ENCODE measurements at regions of chr6 and their contacts with region 1.

Region 1: DNA sequence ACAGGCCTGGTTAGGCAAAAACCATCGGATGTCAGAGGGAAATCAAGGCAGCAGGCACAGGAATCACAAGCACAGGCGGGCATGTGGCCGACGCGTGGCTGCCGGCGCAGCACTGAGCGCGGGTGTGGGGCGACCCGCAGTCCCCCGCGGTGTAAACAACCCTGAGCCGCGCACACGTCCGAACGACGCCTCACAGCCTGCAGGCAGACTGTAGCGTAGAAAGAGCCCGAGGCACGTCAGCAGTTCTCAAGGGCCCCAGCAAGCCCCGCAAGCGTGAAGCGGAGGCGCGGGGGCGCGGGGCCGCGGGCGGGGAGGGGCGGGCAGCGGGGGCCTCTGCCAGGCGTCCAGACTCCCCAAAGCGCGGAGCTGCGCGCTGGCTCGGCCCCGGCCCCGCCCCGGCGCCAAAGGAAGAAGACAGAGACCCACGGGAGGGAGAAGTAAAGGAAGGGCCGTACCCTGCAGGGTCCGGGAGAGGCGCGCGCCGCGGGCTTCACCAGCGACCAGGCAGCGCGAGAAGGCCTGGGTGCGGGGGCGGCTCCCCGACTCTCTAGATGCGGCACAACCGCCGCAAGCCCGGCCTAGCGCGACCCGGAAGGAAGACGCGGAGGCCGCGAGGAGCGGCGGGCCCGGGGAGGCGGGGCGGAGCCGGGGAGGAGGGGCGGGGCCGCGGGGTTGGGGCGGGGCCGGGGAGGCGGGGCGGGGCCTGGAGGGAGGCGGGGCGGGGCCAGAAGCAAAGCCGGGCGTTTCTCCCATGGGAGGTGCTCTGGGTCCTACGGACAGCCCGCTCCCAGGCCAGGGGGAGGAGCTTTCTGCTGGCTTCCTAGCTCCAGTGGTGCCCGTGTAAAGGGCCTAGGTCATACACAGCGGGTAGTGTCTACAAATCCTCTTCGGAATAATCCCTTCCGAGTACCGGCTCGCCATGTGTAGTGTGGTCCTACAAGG is at the start of gene FBXL4:
- DNase-seq: peak; percentile 53 to 87 (median 72)
- ATAC-seq: peak; percentile 82
- H3K4me3 ChIP-seq: peak within 1 kb of the TSS; percentile 61 to 64
- H3K4me3 Mint-ChIP-seq: peak within 1 kb of the TSS; percentile 94
- H3K27ac ChIP-seq: peak within 1 kb of the TSS; percentile 46 to 56
- H3K27ac Mint-ChIP-seq: peak within 1 kb of the TSS; percentile 96
- H3K4me1 ChIP-seq: peaks cover 11% of the 10 kb centered on the region
- H3K4me1 Mint-ChIP-seq: peaks cover 34% of the 10 kb centered on the region
- H3K27me3 ChIP-seq: no peaks in the 10 kb centered on the region
- H3K27me3 Mint-ChIP-seq: no peaks in the 10 kb centered on the region
- CTCF ChIP-seq: no peak
- total RNA-seq, gene FBXL4: 4.1 to 5.1 TPM

Region 2: GRCh38 chr6:98834060-98835031 is 113.3 kb before region 1 on chr6 and contains the start of gene POU3F2:
- CTCF ChIA-PET with region 1: no interaction called
- POLR2A ChIA-PET with region 1: no interaction called
- intact Hi-C with region 1: loop called in 1 of 2 experiments (anchors 1 kb)
- DNase-seq: peak in 8 of 9 experiments; percentile 35 to 74 (median 59)
- ATAC-seq: peak; percentile 67
- H3K4me3 ChIP-seq: peak within 1 kb of the TSS; percentile 55 to 58
- H3K4me3 Mint-ChIP-seq: peak within 1 kb of the TSS; percentile 94
- H3K27ac ChIP-seq: no peak within 1 kb of the TSS
- H3K27ac Mint-ChIP-seq: no peak within 1 kb of the TSS
- H3K4me1 ChIP-seq: peaks cover 29% of the 10 kb centered on the region
- H3K4me1 Mint-ChIP-seq: peaks cover 43% of the 10 kb centered on the region
- H3K27me3 ChIP-seq: peaks cover 44 to 61% of the 10 kb centered on the region in 2 experiments
- H3K27me3 Mint-ChIP-seq: peaks cover 65% of the 10 kb centered on the region
- CTCF ChIP-seq: no peak
- total RNA-seq, gene POU3F2: not detected

Region 3: GRCh38 chr6:98904096-98904495 is 43.5 kb before region 1 on chr6:
- CTCF ChIA-PET with region 1: no interaction called
- POLR2A ChIA-PET with region 1: no interaction called
- intact Hi-C with region 1: no loop called
- DNase-seq: no peak
- ATAC-seq: no peak
- H3K4me3 ChIP-seq: no peak overlapping the region
- H3K4me3 Mint-ChIP-seq: no peak overlapping the region
- H3K27ac ChIP-seq: no peak overlapping the region
- H3K27ac Mint-ChIP-seq: no peak overlapping the region
- H3K4me1 ChIP-seq: no peaks in the 10 kb centered on the region
- H3K4me1 Mint-ChIP-seq: no peaks in the 10 kb centered on the region
- H3K27me3 ChIP-seq: no peaks in the 10 kb centered on the region
- H3K27me3 Mint-ChIP-seq: no peaks in the 10 kb centered on the region
- CTCF ChIP-seq: no peak

Region 4: DNA sequence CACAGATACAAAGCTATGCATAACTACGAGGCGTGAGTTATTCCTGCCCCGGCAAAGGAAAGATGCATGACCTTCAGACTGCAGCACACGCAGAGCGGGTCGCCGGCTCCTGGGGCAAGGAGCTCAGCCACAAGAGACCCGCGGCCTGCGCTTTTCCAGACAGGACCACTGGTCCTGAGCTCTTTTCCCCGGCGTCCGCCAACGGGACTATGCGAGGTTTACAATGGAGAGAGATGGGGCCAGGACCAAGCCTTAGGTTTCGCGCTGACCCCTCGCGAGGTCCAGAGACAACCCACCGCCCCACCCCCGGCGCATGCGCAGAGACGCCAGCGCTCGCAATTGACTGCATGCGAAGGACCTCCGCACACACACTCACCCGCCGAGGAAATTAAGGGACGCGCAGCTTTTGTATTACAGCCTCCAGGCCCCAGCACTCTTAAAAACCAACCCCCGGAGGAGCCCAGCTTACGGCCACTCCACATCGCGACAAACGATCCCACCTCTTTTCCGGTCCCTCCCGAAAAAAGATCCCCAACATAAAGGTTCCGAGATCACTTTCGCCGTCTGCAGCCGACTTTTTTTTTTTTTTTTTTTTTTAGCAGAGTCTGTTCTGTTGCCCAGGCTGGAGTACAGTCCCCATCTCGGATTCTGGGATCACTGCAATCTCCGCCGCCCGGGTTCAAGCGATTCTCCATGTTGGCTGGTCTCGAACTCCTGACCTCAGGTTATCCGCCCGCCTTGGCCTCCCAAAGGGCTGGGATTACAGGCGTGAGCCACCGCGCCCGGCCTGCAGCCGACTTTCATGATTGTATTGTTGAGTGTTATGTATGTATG is 446.3 kb after region 1 on chr6 and contains the start of gene COQ3:
- CTCF ChIA-PET with region 1: no interaction called
- POLR2A ChIA-PET with region 1: no interaction called
- intact Hi-C with region 1: loop called in 1 of 2 experiments (anchors 10 kb)
- DNase-seq: peak; percentile 28 to 79 (median 65)
- ATAC-seq: peak; percentile 70
- H3K4me3 ChIP-seq: peak within 1 kb of the TSS; percentile 73 to 94
- H3K4me3 Mint-ChIP-seq: peak within 1 kb of the TSS; percentile 95
- H3K27ac ChIP-seq: peak within 1 kb of the TSS; percentile 57 to 62
- H3K27ac Mint-ChIP-seq: peak within 1 kb of the TSS; percentile 91
- H3K4me1 ChIP-seq: peaks cover 5% of the 10 kb centered on the region
- H3K4me1 Mint-ChIP-seq: peaks cover 25% of the 10 kb centered on the region
- H3K27me3 ChIP-seq: no peaks in the 10 kb centered on the region
- H3K27me3 Mint-ChIP-seq: no peaks in the 10 kb centered on the region
- CTCF ChIP-seq: no peak
- total RNA-seq, gene COQ3: 1.6 to 1.9 TPM

Region 5: GRCh38 chr6:99520855-99521632 is 573.4 kb after region 1 on chr6:
- CTCF ChIA-PET with region 1: no interaction called
- POLR2A ChIA-PET with region 1: no interaction called
- intact Hi-C with region 1: loop called in 1 of 2 experiments (anchors 10 kb)
- DNase-seq: peak; percentile 37 to 83 (median 66)
- ATAC-seq: peak; percentile 91
- H3K4me3 ChIP-seq: peak overlapping the region; percentile 79 to 94
- H3K4me3 Mint-ChIP-seq: peak overlapping the region; percentile 96
- H3K27ac ChIP-seq: peak overlapping the region; percentile 48 to 74
- H3K27ac Mint-ChIP-seq: peak overlapping the region; percentile 92
- H3K4me1 ChIP-seq: peaks cover 12% of the 10 kb centered on the region
- H3K4me1 Mint-ChIP-seq: peaks cover 41% of the 10 kb centered on the region
- H3K27me3 ChIP-seq: no peaks in the 10 kb centered on the region
- H3K27me3 Mint-ChIP-seq: no peaks in the 10 kb centered on the region
- CTCF ChIP-seq: peak; percentile 89

Measured in CD8-positive, alpha-beta T cell (primary cell).